ENCODE measurements at regions of chr17 and their contacts with region 1.

Region 1: DNA sequence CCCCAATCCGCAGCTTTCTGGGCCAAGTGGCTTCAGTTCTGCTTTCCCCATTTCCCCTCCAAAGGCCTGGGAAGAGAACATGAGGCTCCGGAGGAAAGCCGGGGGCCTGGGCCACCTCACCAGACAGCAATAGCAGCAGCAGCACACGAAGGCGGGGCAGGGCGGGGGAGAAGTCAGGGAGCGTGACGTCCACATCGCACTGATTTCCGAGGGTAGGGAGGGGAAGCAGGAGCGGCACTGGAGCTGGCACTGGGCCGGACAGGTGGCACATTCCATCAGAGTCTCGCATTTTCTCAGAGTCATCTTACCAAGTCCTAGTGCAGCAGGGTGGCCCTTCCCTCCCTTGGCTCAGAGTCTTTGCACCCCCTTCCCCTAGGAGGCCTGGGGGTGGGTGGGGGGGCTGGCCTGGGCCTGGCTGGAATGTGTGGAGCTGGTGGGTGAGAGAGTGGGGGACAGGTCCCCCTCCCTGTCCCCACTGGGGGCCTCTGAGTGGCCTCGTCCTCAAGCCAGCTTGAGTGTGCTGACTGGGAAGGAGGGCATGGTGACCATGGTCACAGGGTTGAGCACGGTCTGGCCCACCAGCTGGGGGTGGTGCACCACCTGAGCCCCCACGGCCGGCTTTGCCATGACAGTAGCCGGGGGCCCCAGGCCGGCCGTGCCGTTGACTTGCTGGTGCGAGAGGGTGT is 14.3 kb downstream of the MNT start:
- DNase-seq: peak in 1 of 5 donors; percentile 12
- H3K4me3 ChIP-seq: no peak overlapping the region
- H3K4me3 Mint-ChIP-seq: no peak overlapping the region
- H3K27ac ChIP-seq: no peak overlapping the region
- H3K27ac Mint-ChIP-seq: peak overlapping the region in 1 of 7 donors; percentile 46
- H3K4me1 ChIP-seq: peaks cover 22% of the 10 kb centered on the region
- H3K4me1 Mint-ChIP-seq: peaks cover 11 to 46% (median 21%) of the 10 kb centered on the region in 4 donors
- H3K27me3 ChIP-seq: no peaks in the 10 kb centered on the region
- H3K27me3 Mint-ChIP-seq: no peaks in the 10 kb centered on the region

Region 2: DNA sequence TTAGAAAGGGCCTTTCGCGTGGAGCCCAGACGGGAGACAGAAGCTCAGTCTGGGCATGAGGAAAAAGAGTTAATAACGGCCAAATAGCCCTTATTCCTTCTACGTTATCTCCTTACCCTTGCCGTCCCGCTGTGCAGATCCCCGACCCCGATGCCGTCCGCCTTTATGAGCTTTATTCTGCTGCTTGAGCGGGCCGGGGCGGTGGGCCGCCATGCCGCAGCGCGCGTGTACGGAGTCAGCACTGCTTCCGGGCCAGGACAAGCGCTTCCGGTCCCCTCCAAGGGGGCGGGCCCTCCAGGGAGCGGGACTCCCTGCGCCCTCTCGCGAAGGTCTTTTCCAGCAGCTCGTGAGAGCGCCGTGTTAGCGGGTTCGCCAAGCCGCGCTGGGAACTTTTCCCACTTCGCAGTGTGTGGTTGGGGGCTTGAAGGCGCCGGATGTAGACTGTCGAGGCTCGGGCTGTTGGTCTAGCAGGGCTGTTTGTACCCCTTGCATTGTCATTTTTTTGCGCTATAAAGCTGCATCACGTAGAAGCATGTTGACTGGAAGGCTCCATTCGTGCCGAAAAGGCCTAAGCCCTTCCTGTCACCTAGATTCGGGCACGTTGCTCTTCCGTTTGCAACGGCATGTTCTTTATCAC is 50.2 kb before region 1 on chr17 and contains the start of gene TSR1:
- CTCF ChIA-PET with region 1: interaction called, 9 read pairs
- POLR2A ChIA-PET with region 1: interaction called, 10 read pairs
- intact Hi-C with region 1: no loop called
- DNase-seq: peak; percentile 86 to 88 (median 87)
- H3K4me3 ChIP-seq: peak within 1 kb of the TSS; percentile 94 to 97
- H3K4me3 Mint-ChIP-seq: peak within 1 kb of the TSS; percentile 97 to 100 (median 99)
- H3K27ac ChIP-seq: peak within 1 kb of the TSS; percentile 70
- H3K27ac Mint-ChIP-seq: peak within 1 kb of the TSS; percentile 93 to 98 (median 96)
- H3K4me1 ChIP-seq: peaks cover 20% of the 10 kb centered on the region
- H3K4me1 Mint-ChIP-seq: peaks cover 18 to 34% (median 26%) of the 10 kb centered on the region in 4 donors
- H3K27me3 ChIP-seq: no peaks in the 10 kb centered on the region
- H3K27me3 Mint-ChIP-seq: no peaks in the 10 kb centered on the region
- total RNA-seq, gene TSR1: 22.6 to 31.7 TPM

Region 3: DNA sequence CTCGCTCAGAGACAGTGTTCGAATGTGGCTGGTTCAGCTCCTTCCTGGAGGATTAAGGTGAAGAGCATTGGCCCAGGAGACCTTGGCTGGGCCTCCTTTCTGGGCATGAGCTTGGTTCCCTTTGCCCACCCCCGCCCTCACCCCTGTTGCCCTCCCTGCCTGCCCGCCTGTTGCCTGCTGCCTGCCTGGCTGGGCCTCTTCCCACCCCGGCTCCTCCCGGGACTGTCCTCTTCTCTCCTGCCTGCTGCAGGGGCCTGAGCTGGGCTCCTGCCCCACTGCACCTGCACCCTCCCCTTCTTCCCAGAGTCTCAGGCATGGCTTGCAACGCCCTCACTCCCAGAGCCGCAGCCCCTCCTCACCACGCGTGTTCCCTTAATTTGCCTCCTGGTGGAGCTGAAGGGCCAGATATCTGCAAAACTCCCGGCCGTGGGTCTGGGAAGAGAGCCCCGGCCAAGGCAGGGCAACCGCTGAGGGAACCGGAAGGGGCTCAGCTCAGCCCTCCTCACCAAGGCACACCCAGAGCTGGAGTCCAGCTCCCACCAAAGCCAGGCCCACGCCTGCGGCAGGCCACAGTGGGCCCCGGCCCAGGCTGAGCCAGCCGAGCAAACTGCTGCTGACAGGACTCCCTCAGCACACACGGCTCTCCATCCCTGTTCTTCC is 16.9 kb before region 1 on chr17:
- CTCF ChIA-PET with region 1: interaction called, 18 read pairs
- POLR2A ChIA-PET with region 1: no interaction called
- intact Hi-C with region 1: no loop called
- DNase-seq: no peak
- H3K4me3 ChIP-seq: no peak overlapping the region
- H3K4me3 Mint-ChIP-seq: no peak overlapping the region
- H3K27ac ChIP-seq: no peak overlapping the region
- H3K27ac Mint-ChIP-seq: peak overlapping the region in 3 of 7 donors; percentile 46 to 75 (median 48)
- H3K4me1 ChIP-seq: no peaks in the 10 kb centered on the region
- H3K4me1 Mint-ChIP-seq: no peaks in the 10 kb centered on the region
- H3K27me3 ChIP-seq: no peaks in the 10 kb centered on the region
- H3K27me3 Mint-ChIP-seq: no peaks in the 10 kb centered on the region

Region 4: GRCh38 chr17:2406903-2407790 is 20.6 kb after region 1 on chr17:
- CTCF ChIA-PET with region 1: interaction called, 558 read pairs
- POLR2A ChIA-PET with region 1: interaction called, 146 read pairs
- intact Hi-C with region 1: no loop called
- DNase-seq: no peak
- H3K4me3 ChIP-seq: no peak overlapping the region
- H3K4me3 Mint-ChIP-seq: no peak overlapping the region
- H3K27ac ChIP-seq: no peak overlapping the region
- H3K27ac Mint-ChIP-seq: peak overlapping the region in 5 of 7 donors; percentile 57 to 74 (median 68)
- H3K4me1 ChIP-seq: peaks cover 8% of the 10 kb centered on the region
- H3K4me1 Mint-ChIP-seq: peaks cover 4 to 20% (median 9%) of the 10 kb centered on the region in 4 donors
- H3K27me3 ChIP-seq: no peaks in the 10 kb centered on the region
- H3K27me3 Mint-ChIP-seq: no peaks in the 10 kb centered on the region

Region 5: GRCh38 chr17:2500446-2500845 is 113.9 kb after region 1 on chr17:
- CTCF ChIA-PET with region 1: no interaction called
- POLR2A ChIA-PET with region 1: no interaction called
- intact Hi-C with region 1: no loop called
- DNase-seq: no peak
- H3K4me3 ChIP-seq: no peak overlapping the region
- H3K4me3 Mint-ChIP-seq: no peak overlapping the region
- H3K27ac ChIP-seq: no peak overlapping the region
- H3K27ac Mint-ChIP-seq: no peak overlapping the region
- H3K4me1 ChIP-seq: peaks cover 5% of the 10 kb centered on the region
- H3K4me1 Mint-ChIP-seq: peaks cover 12 to 18% (median 16%) of the 10 kb centered on the region in 4 donors
- H3K27me3 ChIP-seq: no peaks in the 10 kb centered on the region
- H3K27me3 Mint-ChIP-seq: no peaks in the 10 kb centered on the region

Region 6: GRCh38 chr17:2602597-2603017 is 216.1 kb after region 1 on chr17:
- CTCF ChIA-PET with region 1: no interaction called
- POLR2A ChIA-PET with region 1: no interaction called
- intact Hi-C with region 1: no loop called
- DNase-seq: no peak
- H3K4me3 ChIP-seq: no peak overlapping the region
- H3K4me3 Mint-ChIP-seq: peak overlapping the region in 5 of 8 donors; percentile 10 to 65 (median 40)
- H3K27ac ChIP-seq: peak overlapping the region; percentile 1
- H3K27ac Mint-ChIP-seq: peak overlapping the region; percentile 2 to 79 (median 57)
- H3K4me1 ChIP-seq: peaks cover 88% of the 10 kb centered on the region
- H3K4me1 Mint-ChIP-seq: peaks cover 46 to 78% (median 57%) of the 10 kb centered on the region in 4 donors
- H3K27me3 ChIP-seq: no peaks in the 10 kb centered on the region
- H3K27me3 Mint-ChIP-seq: no peaks in the 10 kb centered on the region

Region 7: GRCh38 chr17:2672026-2672425 is 285.5 kb after region 1 on chr17:
- CTCF ChIA-PET with region 1: interaction called, 8 read pairs
- POLR2A ChIA-PET with region 1: no interaction called
- intact Hi-C with region 1: loop called (anchors 1 kb)
- DNase-seq: no peak
- H3K4me3 ChIP-seq: no peak overlapping the region
- H3K4me3 Mint-ChIP-seq: no peak overlapping the region
- H3K27ac ChIP-seq: no peak overlapping the region
- H3K27ac Mint-ChIP-seq: peak overlapping the region in 1 of 7 donors; percentile 48
- H3K4me1 ChIP-seq: peaks cover 3% of the 10 kb centered on the region
- H3K4me1 Mint-ChIP-seq: peaks cover 3 to 6% (median 4%) of the 10 kb centered on the region in 4 donors
- H3K27me3 ChIP-seq: no peaks in the 10 kb centered on the region
- H3K27me3 Mint-ChIP-seq: no peaks in the 10 kb centered on the region

Region 8: GRCh38 chr17:2718150-2718938 is 331.8 kb after region 1 on chr17:
- CTCF ChIA-PET with region 1: no interaction called
- POLR2A ChIA-PET with region 1: no interaction called
- intact Hi-C with region 1: no loop called
- DNase-seq: no peak
- H3K4me3 ChIP-seq: no peak overlapping the region
- H3K4me3 Mint-ChIP-seq: no peak overlapping the region
- H3K27ac ChIP-seq: no peak overlapping the region
- H3K27ac Mint-ChIP-seq: no peak overlapping the region
- H3K4me1 ChIP-seq: no peaks in the 10 kb centered on the region
- H3K4me1 Mint-ChIP-seq: no peaks in the 10 kb centered on the region
- H3K27me3 ChIP-seq: no peaks in the 10 kb centered on the region
- H3K27me3 Mint-ChIP-seq: no peaks in the 10 kb centered on the region

Measured in CD4-positive, alpha-beta memory T cell (primary cell).